ENCODE measurements at regions of chr21 and their contacts with region 1.

Region 1: DNA sequence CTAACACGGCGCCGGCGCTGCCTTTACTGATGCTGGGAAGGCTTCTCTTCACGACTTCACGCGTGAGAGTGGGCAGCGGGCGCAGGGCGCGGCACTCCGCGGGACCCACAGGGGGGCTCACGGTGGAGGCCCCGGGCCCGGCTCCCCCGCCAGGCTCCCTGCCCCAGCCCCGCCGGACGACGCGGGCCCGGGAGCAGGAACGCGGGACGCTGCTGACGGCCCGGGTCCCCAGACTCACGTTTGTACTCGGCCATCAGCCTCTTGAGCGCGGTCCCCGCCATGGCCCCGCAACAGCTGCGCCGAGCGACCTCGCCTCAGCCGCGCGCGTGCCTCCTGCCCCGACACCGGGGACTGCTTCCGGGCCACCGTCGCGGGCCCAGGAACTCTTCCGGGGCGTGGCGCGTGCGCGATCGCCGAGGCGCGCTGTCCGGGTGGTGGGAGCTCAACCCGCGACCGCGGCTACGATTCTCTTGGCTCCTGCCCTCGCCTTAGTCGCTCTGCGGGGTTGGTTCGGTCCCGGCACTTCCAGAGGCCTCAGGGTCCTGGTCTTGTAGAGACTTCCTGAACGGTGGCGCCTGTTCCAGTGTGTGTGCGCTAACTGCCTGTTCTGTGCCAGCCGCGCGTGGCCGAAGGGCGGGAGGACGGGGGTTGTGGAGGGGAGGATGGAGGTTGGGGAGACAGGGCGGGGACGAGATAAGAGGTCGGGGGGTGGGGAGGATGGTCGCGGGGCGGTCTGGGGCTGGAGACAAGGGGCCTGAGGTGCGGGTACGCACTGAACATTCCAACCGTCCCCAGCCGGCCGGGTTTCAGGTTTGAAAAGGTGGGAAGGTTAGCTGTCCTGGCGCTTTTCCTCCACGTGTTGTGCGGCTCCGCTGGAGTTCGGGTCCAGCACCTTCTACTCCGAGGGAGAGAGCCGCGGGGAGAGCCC is at the start of gene UBE2G2:
- DNase-seq: peak; percentile 91
- ATAC-seq: peak; percentile 90
- H3K4me3 ChIP-seq: peak within 1 kb of the TSS; percentile 63 to 87 (median 78)
- H3K4me3 Mint-ChIP-seq: peak within 1 kb of the TSS; percentile 100
- H3K27ac ChIP-seq: peak within 1 kb of the TSS; percentile 65 to 75
- H3K27ac Mint-ChIP-seq: peak within 1 kb of the TSS; percentile 95
- H3K4me1 ChIP-seq: peaks cover 19 to 21% of the 10 kb centered on the region in 2 donors
- H3K4me1 Mint-ChIP-seq: peaks cover 40% of the 10 kb centered on the region
- H3K27me3 ChIP-seq: no peaks in the 10 kb centered on the region
- H3K27me3 Mint-ChIP-seq: no peaks in the 10 kb centered on the region
- CTCF ChIP-seq: no peak
- total RNA-seq, gene UBE2G2: 96.4 and 97.2 TPM in 2 replicates

Region 2: DNA sequence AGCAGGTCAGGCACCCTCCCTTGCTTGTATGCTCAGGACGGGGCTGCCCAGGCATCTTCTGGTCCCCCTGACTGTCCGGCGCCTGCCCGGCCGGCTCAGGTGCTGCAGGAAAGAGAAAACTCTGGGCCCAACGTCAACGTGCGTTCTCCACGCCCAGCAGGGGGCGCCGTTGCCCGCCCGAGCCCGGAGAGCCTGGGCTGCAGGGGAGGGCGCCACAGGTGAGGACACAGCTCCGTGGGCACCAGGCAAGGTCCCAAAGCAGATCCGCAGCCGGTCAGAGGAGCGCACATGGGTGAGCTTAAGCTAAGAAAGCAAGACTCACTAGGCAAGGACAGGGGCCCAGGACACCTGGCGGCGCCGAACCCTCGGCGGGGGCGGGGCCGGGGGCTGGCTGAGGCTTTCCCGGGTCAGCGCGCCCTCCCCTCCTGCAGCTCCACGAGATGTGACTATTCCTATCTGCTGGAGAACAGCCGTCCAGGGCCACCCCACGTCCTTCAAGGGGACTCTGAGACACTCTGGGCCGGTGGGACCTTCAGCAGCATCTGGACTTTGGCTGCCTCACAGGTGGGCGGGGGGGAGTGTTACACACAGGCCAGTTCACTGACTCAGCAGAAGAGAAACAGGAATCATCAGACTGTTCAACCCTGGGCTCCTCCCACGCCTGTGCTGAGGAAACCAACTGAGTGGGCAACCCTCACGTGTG is 291.1 kb before region 1 on chr21:
- CTCF ChIA-PET with region 1: interaction called, 17 read pairs
- POLR2A ChIA-PET with region 1: no interaction called
- intact Hi-C with region 1: loop called (anchors 2 kb)
- DNase-seq: peak; percentile 77
- ATAC-seq: peak; percentile 79
- H3K4me3 ChIP-seq: peak overlapping the region in 3 of 5 experiments; percentile 11 to 35 (median 35)
- H3K4me3 Mint-ChIP-seq: peak overlapping the region; percentile 19
- H3K27ac ChIP-seq: no peak overlapping the region
- H3K27ac Mint-ChIP-seq: no peak overlapping the region
- H3K4me1 ChIP-seq: peaks cover 9 to 11% of the 10 kb centered on the region in 2 donors
- H3K4me1 Mint-ChIP-seq: peaks cover 7% of the 10 kb centered on the region
- H3K27me3 ChIP-seq: peaks cover 0 to 9% (median 4%) of the 10 kb centered on the region in 4 experiments
- H3K27me3 Mint-ChIP-seq: peaks cover 10% of the 10 kb centered on the region
- CTCF ChIP-seq: peak; percentile 85

Region 3: GRCh38 chr21:44779417-44780136 is 22.2 kb before region 1 on chr21:
- CTCF ChIA-PET with region 1: no interaction called
- POLR2A ChIA-PET with region 1: no interaction called
- intact Hi-C with region 1: no loop called
- DNase-seq: no peak
- ATAC-seq: no peak
- H3K4me3 ChIP-seq: no peak overlapping the region
- H3K4me3 Mint-ChIP-seq: no peak overlapping the region
- H3K27ac ChIP-seq: no peak overlapping the region
- H3K27ac Mint-ChIP-seq: no peak overlapping the region
- H3K4me1 ChIP-seq: no peaks in the 10 kb centered on the region
- H3K4me1 Mint-ChIP-seq: peaks cover 6% of the 10 kb centered on the region
- H3K27me3 ChIP-seq: no peaks in the 10 kb centered on the region
- H3K27me3 Mint-ChIP-seq: no peaks in the 10 kb centered on the region
- CTCF ChIP-seq: no peak

Region 4: DNA sequence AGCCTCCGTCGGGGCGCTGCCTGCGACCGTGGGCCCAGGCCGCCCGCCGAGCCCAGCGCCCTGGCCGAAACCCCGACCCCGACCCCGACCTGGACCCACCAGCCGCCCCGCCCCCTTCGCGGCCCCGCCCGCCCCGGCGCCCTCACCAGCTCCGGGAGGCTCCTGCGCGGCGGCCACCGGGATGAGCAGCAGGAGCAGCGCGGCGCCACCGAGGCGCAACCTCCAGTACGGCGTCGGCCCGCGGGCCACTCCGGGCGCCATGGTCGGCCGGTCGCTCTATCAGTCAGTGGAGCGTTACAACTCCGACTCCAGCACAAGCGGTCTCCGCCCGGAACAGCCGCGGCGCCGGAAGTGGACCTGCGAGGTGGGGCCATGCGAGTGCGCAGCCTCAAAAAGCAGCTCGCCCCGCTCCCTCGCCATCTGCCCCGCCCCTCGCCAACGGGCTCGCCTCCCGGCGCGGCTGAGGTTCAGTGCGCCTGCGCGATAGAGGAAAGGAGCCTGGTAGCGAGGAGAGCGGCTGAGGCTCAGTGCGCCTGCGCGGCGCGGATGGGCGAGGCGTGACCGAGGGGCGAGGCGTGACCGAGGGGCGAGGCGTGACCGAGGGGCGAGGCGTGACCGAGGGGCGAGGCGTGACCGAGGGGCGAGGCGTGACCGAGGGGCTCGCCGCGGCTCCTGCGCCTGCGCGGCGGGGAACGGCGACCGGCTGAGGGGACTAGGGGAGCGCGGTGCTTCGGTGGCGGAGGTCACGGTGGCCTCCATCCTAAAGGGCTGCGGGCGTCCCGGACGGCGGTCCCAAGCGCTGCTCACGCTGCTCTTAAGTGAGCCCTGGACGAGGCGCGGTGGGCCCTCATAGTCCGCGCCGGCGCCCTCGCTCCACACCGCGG is 71.9 kb after region 1 on chr21 and contains the start of gene PTTG1IP:
- CTCF ChIA-PET with region 1: interaction called, 38 read pairs
- POLR2A ChIA-PET with region 1: interaction called, 5 read pairs
- intact Hi-C with region 1: loop called (anchors 2 kb)
- DNase-seq: peak; percentile 99
- ATAC-seq: peak; percentile 83
- H3K4me3 ChIP-seq: peak within 1 kb of the TSS; percentile 73 to 92 (median 81)
- H3K4me3 Mint-ChIP-seq: peak within 1 kb of the TSS; percentile 92
- H3K27ac ChIP-seq: peak within 1 kb of the TSS; percentile 80 to 93
- H3K27ac Mint-ChIP-seq: peak within 1 kb of the TSS; percentile 98
- H3K4me1 ChIP-seq: peaks cover 50 to 56% of the 10 kb centered on the region in 2 donors
- H3K4me1 Mint-ChIP-seq: peaks cover 60% of the 10 kb centered on the region
- H3K27me3 ChIP-seq: no peaks in the 10 kb centered on the region
- H3K27me3 Mint-ChIP-seq: no peaks in the 10 kb centered on the region
- CTCF ChIP-seq: no peak
- total RNA-seq, gene PTTG1IP: 58.6 and 62.9 TPM in 2 replicates

Region 5: GRCh38 chr21:44911389-44912157 is 109.8 kb after region 1 on chr21:
- CTCF ChIA-PET with region 1: interaction called, 10 read pairs
- POLR2A ChIA-PET with region 1: no interaction called
- intact Hi-C with region 1: no loop called
- DNase-seq: peak; percentile 58
- ATAC-seq: peak; percentile 40
- H3K4me3 ChIP-seq: peak overlapping the region in 4 of 5 experiments; percentile 1 to 48 (median 32)
- H3K4me3 Mint-ChIP-seq: peak overlapping the region; percentile 41
- H3K27ac ChIP-seq: peak overlapping the region; percentile 79 to 83
- H3K27ac Mint-ChIP-seq: peak overlapping the region; percentile 68
- H3K4me1 ChIP-seq: peaks cover 77 to 89% of the 10 kb centered on the region in 2 donors
- H3K4me1 Mint-ChIP-seq: peaks cover 77% of the 10 kb centered on the region
- H3K27me3 ChIP-seq: no peaks in the 10 kb centered on the region
- H3K27me3 Mint-ChIP-seq: no peaks in the 10 kb centered on the region
- CTCF ChIP-seq: peak; percentile 63

Region 6: DNA sequence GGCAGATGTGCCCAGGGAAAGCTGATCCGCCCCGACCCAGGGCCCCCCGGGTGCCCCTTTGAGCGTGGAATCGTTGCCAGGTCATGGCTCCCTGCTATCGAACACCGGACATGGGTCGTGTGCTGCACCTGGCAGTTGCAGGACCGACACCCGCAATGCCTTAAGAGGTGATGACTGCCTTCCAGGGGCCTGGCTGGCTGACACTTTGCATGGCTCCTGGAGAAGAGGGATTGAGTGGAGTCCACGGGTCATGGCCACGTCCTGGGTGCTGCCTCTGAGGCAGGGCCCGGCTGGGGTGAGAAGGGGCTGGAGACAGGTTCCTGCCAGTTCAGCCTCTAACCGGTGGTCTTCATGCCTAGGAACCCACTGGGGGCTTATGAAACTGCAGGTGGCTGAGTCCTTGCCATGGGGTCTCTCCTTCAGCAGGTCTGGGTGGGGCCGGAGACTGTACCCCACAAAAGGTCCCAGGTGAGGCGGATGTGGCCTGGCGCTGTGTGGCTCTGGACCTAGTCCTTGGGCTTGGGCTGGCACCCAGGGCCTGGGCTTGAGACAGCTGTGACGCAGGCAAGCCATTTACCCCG is 132.0 kb after region 1 on chr21:
- CTCF ChIA-PET with region 1: interaction called, 49 read pairs
- POLR2A ChIA-PET with region 1: interaction called, 16 read pairs
- intact Hi-C with region 1: loop called (anchors 1 kb)
- DNase-seq: no peak
- ATAC-seq: no peak
- H3K4me3 ChIP-seq: no peak overlapping the region
- H3K4me3 Mint-ChIP-seq: peak overlapping the region; percentile 23
- H3K27ac ChIP-seq: no peak overlapping the region
- H3K27ac Mint-ChIP-seq: no peak overlapping the region
- H3K4me1 ChIP-seq: peaks cover 32 to 43% of the 10 kb centered on the region in 2 donors
- H3K4me1 Mint-ChIP-seq: peaks cover 38% of the 10 kb centered on the region
- H3K27me3 ChIP-seq: no peaks in the 10 kb centered on the region
- H3K27me3 Mint-ChIP-seq: no peaks in the 10 kb centered on the region
- CTCF ChIP-seq: no peak

Measured in B cell (primary cell).